ENCODE measurements at regions of chr17 and their contacts with region 1.

Region 1: DNA sequence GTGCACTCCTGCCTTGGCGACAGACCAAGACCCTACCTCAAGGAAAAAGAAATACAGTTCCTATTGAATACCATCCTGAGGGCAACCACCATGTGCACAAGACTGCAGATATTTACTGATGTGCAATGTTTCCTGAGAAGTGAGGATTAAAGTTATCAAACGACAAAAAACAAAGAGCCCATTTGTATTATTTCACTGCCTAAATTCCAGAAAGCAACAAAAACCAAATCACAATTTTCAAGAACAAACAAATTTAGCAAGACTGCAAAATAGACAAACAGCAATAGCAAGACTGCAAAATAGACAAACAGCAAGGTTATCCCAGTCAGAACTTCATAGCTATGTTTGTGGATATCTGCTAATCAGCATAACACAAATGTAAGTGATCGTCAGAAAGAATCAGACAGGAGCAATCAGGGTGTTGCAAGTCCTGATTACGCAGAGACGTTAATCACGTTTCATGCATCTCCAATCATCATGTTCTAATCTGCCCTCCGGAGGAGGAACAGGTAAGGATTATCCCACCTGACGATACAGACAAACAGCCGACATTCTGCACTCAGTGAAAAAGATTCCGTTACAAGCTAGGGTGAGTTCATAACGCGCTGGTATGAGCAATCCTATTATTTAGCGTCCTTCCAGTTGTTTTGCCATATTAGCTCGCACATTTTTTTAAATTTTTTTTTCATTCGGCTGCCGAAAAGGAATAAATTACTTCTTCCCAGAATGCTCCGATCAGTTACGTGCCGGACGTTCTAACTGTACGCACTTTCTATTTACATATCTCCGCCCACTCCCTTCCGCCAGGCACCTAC is 2.9 kb downstream of the TMEM107 start:
- DNase-seq: peak; percentile 40
- ATAC-seq: peak; percentile 76
- H3K4me3 Mint-ChIP-seq: peak overlapping the region; percentile 84
- H3K27ac Mint-ChIP-seq: peak overlapping the region; percentile 100
- H3K4me1 Mint-ChIP-seq: peaks cover 44% of the 10 kb centered on the region
- H3K27me3 Mint-ChIP-seq: no peaks in the 10 kb centered on the region
- CTCF ChIP-seq: no peak

Region 2: GRCh38 chr17:7844292-7845154 is 328.7 kb before region 1 on chr17:
- CTCF ChIA-PET with region 1: no interaction called
- POLR2A ChIA-PET with region 1: interaction called, 27 read pairs
- intact Hi-C with region 1: loop called (anchors 1 kb)
- DNase-seq: peak; percentile 83
- ATAC-seq: peak; percentile 46
- H3K4me3 Mint-ChIP-seq: peak overlapping the region; percentile 98
- H3K27ac Mint-ChIP-seq: peak overlapping the region; percentile 100
- H3K4me1 Mint-ChIP-seq: peaks cover 50% of the 10 kb centered on the region
- H3K27me3 Mint-ChIP-seq: no peaks in the 10 kb centered on the region
- CTCF ChIP-seq: no peak

Region 3: GRCh38 chr17:8079291-8080207 is 93.7 kb before region 1 on chr17:
- CTCF ChIA-PET with region 1: interaction called, 4 read pairs
- POLR2A ChIA-PET with region 1: interaction called, 20 read pairs
- intact Hi-C with region 1: no loop called
- DNase-seq: peak; percentile 82
- ATAC-seq: peak; percentile 85
- H3K4me3 Mint-ChIP-seq: peak overlapping the region; percentile 89
- H3K27ac Mint-ChIP-seq: peak overlapping the region; percentile 83
- H3K4me1 Mint-ChIP-seq: peaks cover 17% of the 10 kb centered on the region
- H3K27me3 Mint-ChIP-seq: peaks cover 13% of the 10 kb centered on the region
- CTCF ChIP-seq: no peak

Region 4: DNA sequence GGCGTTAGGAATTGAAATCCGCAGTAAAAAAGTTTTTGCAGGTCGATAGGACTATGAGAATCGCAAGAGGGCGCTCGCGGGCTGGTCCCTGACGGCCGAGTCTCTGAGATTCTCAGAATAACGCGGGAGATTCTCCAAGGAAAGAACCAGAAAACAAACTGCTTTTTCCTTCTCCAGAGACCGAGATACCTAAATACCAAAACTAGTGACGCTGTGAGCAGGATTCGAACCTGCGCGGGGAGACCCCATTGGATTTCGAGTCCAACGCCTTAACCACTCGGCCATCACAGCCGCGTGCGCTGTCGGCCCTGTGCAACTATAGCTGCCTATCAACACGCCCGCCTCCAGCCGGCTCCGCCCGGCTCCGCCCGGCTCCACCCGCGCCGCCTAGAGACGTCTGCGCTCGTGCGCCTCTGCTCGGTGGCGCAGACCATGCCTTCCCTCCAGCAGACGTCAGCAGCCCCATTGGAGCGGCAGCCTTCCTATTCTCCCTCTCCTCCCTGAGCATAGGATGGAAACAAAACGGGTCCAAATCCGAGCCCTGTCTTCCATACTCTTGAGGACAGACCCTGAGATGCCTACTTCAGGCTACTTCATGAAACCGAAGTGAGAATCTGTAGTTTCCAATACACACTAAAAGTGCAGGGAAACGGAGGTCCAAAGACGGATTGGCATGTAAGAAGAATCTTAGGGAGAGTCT is 34.4 kb before region 1 on chr17:
- CTCF ChIA-PET with region 1: interaction called, 3 read pairs
- POLR2A ChIA-PET with region 1: interaction called, 64 read pairs
- intact Hi-C with region 1: no loop called
- DNase-seq: peak; percentile 94
- ATAC-seq: peak; percentile 94
- H3K4me3 Mint-ChIP-seq: no peak overlapping the region
- H3K27ac Mint-ChIP-seq: no peak overlapping the region
- H3K4me1 Mint-ChIP-seq: no peaks in the 10 kb centered on the region
- H3K27me3 Mint-ChIP-seq: no peaks in the 10 kb centered on the region
- CTCF ChIP-seq: peak; percentile 93

Region 5: GRCh38 chr17:8204761-8205555 is 31.7 kb after region 1 on chr17:
- CTCF ChIA-PET with region 1: no interaction called
- POLR2A ChIA-PET with region 1: interaction called, 43 read pairs
- intact Hi-C with region 1: loop called (anchors 1 kb)
- DNase-seq: no peak
- ATAC-seq: no peak
- H3K4me3 Mint-ChIP-seq: no peak overlapping the region
- H3K27ac Mint-ChIP-seq: no peak overlapping the region
- H3K4me1 Mint-ChIP-seq: peaks cover 8% of the 10 kb centered on the region
- H3K27me3 Mint-ChIP-seq: no peaks in the 10 kb centered on the region
- CTCF ChIP-seq: no peak

Region 6: GRCh38 chr17:8268550-8269298 is 95.5 kb after region 1 on chr17:
- CTCF ChIA-PET with region 1: no interaction called
- POLR2A ChIA-PET with region 1: no interaction called
- intact Hi-C with region 1: no loop called
- DNase-seq: no peak
- ATAC-seq: no peak
- H3K4me3 Mint-ChIP-seq: no peak overlapping the region
- H3K27ac Mint-ChIP-seq: no peak overlapping the region
- H3K4me1 Mint-ChIP-seq: no peaks in the 10 kb centered on the region
- H3K27me3 Mint-ChIP-seq: no peaks in the 10 kb centered on the region
- CTCF ChIP-seq: no peak

Region 7: GRCh38 chr17:8288336-8289102 is 115.3 kb after region 1 on chr17 and contains the start of gene RANGRF:
- CTCF ChIA-PET with region 1: interaction called, 3 read pairs
- POLR2A ChIA-PET with region 1: interaction called, 23 read pairs
- intact Hi-C with region 1: no loop called
- DNase-seq: peak; percentile 77
- ATAC-seq: peak; percentile 93
- H3K4me3 Mint-ChIP-seq: peak within 1 kb of the TSS; percentile 98
- H3K27ac Mint-ChIP-seq: peak within 1 kb of the TSS; percentile 97
- H3K4me1 Mint-ChIP-seq: peaks cover 51% of the 10 kb centered on the region
- H3K27me3 Mint-ChIP-seq: no peaks in the 10 kb centered on the region
- CTCF ChIP-seq: no peak
- total RNA-seq, gene RANGRF: 50.1 and 50.9 TPM in 2 replicates

Region 8: DNA sequence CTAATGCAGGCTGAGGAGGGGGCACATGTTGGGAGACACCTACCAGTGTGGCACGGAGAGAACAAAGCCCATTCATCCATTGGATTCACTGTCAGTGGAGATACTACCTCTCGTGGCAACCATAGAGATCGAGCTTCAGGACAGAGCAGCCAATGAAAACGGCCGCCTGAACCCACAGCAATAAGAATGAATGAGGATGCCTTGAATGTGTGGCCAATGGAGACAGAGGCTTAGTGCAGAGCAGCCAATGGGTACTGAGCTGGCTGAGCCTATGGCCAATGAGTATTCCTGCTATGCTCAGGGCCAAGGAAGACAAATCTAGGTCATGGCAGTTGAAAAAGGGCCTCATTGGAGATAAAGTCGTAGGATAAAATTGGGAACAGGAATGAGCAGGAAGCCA is 147.7 kb after region 1 on chr17:
- CTCF ChIA-PET with region 1: no interaction called
- POLR2A ChIA-PET with region 1: no interaction called
- intact Hi-C with region 1: no loop called
- DNase-seq: no peak
- ATAC-seq: no peak
- H3K4me3 Mint-ChIP-seq: no peak overlapping the region
- H3K27ac Mint-ChIP-seq: no peak overlapping the region
- H3K4me1 Mint-ChIP-seq: peaks cover 3% of the 10 kb centered on the region
- H3K27me3 Mint-ChIP-seq: peaks cover 37% of the 10 kb centered on the region
- CTCF ChIP-seq: no peak